SK-N-SH (cell line): ENCODE measurements at regions of chr20 and their contacts with region 1.

Region 1: DNA sequence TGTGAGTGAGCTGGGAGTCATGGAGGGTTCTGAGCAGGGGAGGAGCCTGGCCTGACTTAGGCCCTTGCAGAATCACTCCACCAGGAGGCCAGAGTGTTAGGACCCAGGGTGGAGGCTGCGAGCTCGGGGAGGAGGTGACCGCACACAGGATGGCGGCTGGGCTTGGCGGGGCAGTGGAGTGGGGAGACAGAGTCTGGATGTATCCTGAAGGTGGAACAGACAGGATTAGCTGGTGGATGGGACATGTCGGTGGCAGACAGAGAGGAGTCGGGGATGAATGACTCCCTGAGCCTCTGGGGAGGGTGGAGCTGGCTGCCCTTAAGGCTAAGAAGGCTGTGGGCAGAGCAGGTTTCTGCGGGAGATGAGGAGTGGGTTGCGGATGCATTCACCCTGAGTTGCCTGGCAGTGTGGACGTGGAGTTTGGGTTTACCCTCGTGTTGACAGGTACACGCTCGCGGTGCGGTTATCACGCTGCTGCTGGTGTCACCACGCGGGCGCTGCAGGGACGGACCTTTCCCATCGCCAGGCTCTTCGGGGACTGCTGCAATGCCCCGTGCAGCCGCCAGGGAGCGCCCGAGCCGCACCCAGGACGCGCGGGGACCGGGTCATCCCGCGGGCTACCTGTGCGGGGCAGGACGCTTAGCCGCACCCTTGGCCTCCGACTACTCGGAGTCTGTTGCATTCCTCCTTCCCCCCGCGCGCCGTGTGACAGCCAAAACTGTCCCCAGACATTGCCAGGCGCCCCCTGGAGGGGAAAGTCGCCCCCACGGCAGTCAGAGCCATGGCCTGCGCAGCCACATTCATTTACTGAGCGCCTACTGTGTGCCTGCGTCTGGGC is 43.0 kb upstream of the PTGIS start:
- DNase-seq: peak; percentile 91
- H3K4me3 ChIP-seq: peak overlapping the region; percentile 19 to 61; a peak in 3 of 4 replicates
- H3K27ac ChIP-seq: no peak overlapping the region
- H3K4me1 ChIP-seq: peaks cover 0 to 11% of the 10 kb centered on the region in 2 experiments; a peak in 1 of 4 replicates
- H3K27me3 ChIP-seq: 0 out of 2 replicates have a peak, but pooled peaks cover 5% of the 10 kb centered on the region
- CTCF ChIP-seq: peak; percentile 92
- EP300 ChIP-seq: no peak
- RAD21 ChIP-seq: peak; percentile 93

Region 2: GRCh38 chr20:49338061-49338460 is 272.9 kb before region 1 on chr20:
- CTCF ChIA-PET with region 1: interaction called, 62 read pairs
- POLR2A ChIA-PET with region 1: no interaction called
- DNase-seq: no peak
- H3K4me3 ChIP-seq: no peak overlapping the region
- H3K27ac ChIP-seq: no peak overlapping the region
- H3K4me1 ChIP-seq: peaks cover 0 to 2% of the 10 kb centered on the region in 2 experiments; a peak in 1 of 4 replicates
- H3K27me3 ChIP-seq: no peaks in the 10 kb centered on the region
- CTCF ChIP-seq: no peak
- EP300 ChIP-seq: no peak
- RAD21 ChIP-seq: no peak

Region 3: GRCh38 chr20:49446808-49447207 is 164.1 kb before region 1 on chr20:
- CTCF ChIA-PET with region 1: no interaction called
- POLR2A ChIA-PET with region 1: no interaction called
- DNase-seq: no peak
- H3K4me3 ChIP-seq: no peak overlapping the region
- H3K27ac ChIP-seq: no peak overlapping the region
- H3K4me1 ChIP-seq: peaks cover 0 to 37% of the 10 kb centered on the region in 2 experiments; a peak in 2 of 4 replicates
- H3K27me3 ChIP-seq: no peaks in the 10 kb centered on the region
- CTCF ChIP-seq: no peak
- EP300 ChIP-seq: no peak
- RAD21 ChIP-seq: no peak

Region 4: DNA sequence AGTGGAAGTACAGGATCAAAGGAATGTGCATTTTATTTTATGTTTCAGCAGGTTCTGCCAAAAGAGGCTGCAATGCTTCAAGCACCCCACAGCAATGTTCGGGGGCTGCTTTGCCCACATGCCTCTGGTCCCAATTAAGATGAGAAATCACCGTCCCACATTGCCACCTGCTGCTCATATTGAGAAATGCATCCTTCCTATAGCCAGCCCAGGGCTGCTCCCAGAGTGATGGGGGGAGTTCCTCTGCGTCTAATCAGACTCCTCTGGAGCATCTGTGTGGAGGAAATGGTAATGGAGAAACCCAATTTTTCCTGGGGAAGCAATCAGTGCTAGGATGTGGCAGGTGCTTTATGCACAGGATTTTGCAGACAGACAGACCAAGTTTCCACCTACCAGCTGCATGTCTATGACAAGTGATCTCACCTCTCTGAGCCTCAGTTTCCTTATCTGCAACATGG is 76.6 kb before region 1 on chr20:
- CTCF ChIA-PET with region 1: interaction called, 556 read pairs
- POLR2A ChIA-PET with region 1: no interaction called
- DNase-seq: peak; percentile 79
- H3K4me3 ChIP-seq: no peak overlapping the region
- H3K27ac ChIP-seq: no peak overlapping the region
- H3K4me1 ChIP-seq: peaks cover 0 to 5% of the 10 kb centered on the region in 2 experiments; a peak in 1 of 4 replicates
- H3K27me3 ChIP-seq: no peaks in the 10 kb centered on the region
- CTCF ChIP-seq: peak; percentile 80
- EP300 ChIP-seq: no peak; a peak in 1 of 4 replicates
- RAD21 ChIP-seq: peak; percentile 85

Region 5: DNA sequence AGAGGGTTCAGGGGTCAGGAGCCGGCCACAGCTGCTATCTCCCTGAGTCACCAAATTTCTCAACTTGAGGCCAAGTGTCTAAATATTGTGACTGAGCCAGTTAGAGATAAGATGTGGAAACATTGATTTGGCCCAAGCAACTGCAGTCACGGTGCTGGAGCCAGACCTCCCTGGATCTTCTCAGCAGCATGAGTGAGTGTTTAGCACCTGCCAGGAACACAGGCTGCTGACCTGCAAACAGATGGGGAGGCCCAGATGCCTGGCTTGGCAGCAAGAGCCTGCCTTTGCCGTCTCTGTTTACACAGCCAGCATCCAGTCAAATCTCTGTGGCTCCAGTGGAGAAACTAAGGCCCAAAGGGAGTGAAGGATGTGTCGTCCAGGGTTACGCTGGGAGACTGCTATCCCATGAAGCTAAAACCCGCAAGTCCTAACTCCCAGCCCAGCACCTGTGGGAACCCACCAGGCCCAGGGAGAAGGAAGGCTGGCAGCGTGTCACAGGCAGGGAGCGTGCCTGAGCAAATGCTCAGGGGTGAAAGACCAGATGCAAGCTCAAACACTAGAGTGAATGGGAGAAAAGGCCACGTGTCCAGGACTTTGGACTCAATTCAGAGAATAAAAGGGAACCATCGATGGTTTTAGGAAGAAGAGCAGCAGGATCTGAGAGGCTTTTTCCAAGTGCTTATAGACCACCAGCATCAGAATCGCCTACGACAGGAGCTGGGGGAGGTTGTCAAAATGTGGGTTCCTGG is 27.1 kb before region 1 on chr20:
- CTCF ChIA-PET with region 1: interaction called, 33 read pairs
- POLR2A ChIA-PET with region 1: no interaction called
- DNase-seq: no peak
- H3K4me3 ChIP-seq: no peak overlapping the region
- H3K27ac ChIP-seq: no peak overlapping the region; a peak in 1 of 4 replicates
- H3K4me1 ChIP-seq: peaks cover 0 to 10% of the 10 kb centered on the region in 2 experiments; a peak in 2 of 4 replicates
- H3K27me3 ChIP-seq: no peaks in the 10 kb centered on the region
- CTCF ChIP-seq: no peak
- EP300 ChIP-seq: no peak
- RAD21 ChIP-seq: no peak

Region 6: DNA sequence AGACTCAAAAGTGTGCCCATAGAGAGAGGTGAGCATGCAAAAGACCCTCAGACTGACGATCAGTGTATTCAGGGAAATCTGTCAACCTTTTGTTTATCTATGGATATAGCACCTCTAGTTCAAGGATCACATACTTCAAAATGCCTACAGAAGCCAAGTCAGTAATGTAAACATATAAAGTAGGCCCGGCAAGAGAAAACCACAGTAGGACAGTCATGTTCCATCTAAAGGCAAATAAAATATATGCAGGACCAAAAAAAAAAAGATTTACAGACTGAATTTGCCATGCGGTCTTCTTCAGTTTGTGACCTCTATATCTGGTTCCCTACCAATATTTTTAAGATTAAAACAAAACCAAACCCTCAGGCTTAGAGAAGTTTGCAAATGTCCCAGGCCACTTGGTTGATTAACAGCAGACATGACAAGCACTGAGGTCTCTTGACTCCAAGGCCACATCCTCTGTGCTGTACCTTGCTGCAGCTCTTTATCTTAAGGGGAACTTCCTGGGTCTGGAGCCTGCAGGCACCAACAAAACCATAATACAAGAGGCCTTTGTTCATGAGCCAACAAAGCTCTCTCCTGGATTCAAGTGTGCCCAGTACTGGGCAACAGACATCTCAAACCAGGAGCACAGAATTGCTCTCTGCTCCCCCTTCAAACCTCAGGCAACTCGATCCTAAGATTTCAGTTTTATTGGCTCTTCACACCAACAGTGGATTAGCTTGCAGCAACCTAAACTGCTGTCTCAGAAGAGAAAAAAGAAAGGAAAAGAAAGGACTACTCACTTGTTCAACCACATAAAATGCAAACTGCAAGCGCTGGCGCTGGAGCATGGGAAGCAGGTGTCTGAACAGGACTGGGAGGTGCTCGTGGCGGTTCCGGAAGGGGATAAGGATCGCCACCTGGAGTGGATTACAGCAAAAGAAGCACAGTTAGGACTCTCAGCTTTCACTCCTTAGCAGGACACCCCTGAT is 31.1 kb after region 1 on chr20:
- CTCF ChIA-PET with region 1: interaction called, 18 read pairs
- POLR2A ChIA-PET with region 1: no interaction called
- DNase-seq: no peak
- H3K4me3 ChIP-seq: no peak overlapping the region
- H3K27ac ChIP-seq: no peak overlapping the region
- H3K4me1 ChIP-seq: peaks cover 0 to 9% of the 10 kb centered on the region in 2 experiments; a peak in 2 of 4 replicates
- H3K27me3 ChIP-seq: no peaks in the 10 kb centered on the region
- CTCF ChIP-seq: no peak
- EP300 ChIP-seq: no peak
- RAD21 ChIP-seq: no peak

Region 7: DNA sequence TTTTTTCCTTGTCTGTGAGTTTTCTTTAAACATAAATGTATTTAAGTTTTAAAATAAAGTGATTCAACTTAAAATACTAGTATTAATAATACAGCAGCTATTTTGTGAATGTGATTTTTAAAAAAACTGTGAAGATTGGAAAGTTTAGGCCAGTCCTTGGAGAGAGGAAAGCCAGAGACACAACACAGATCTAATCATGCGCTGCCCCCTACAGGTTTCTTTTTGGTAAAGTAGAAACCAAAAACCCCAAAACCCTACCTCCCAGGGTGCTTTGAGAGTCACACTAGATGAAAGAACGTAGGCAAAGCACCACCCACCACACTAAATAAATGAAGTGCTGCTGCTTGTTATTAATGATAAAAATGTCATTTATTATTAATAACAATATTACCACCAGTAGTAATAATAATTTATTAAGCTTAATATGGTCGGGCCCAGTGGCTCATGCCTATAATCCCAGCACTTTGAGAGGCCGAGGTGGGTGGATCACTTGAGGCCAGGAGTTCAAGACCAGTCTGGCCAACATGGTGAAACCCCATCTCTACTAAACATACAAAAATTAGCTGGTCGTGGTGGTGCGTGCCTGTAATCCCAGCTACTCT is 235.4 kb after region 1 on chr20:
- CTCF ChIA-PET with region 1: interaction called, 249 read pairs
- POLR2A ChIA-PET with region 1: interaction called, 6 read pairs
- DNase-seq: peak; percentile 65
- H3K4me3 ChIP-seq: no peak overlapping the region
- H3K27ac ChIP-seq: no peak overlapping the region
- H3K4me1 ChIP-seq: peaks cover 0 to 11% of the 10 kb centered on the region in 2 experiments; a peak in 2 of 4 replicates
- H3K27me3 ChIP-seq: no peaks in the 10 kb centered on the region
- CTCF ChIP-seq: peak; percentile 75
- EP300 ChIP-seq: no peak
- RAD21 ChIP-seq: peak; percentile 88

Region 8: DNA sequence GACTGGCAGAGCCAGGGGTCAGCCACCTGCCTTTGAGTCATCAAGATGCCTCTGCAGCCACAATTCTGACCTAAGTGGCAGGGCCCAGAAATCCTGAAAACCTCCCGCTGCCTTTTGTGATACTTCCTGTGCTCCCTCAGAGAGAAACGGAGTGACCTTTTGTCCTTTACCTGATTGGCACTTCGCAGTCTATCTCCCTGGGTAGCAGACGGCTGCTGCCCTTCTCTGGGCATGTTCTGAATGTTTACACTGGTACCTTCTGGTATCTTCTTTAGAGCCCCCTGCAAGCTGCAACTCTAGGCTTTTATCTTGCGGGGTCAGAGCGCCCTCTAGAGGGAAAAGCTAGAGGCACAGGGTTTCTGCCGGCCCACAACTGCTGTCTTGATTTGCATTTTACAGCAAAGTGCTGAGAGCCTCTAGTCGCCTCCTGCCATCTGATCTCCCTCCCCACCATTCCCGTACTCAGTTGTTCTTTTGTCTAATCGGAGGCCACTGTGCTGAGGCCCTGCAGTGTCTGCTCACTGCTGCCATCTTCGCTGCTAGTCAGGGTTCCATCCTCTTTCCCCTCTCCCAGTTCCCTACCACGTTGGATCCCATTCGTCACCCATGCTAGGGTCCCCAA is 277.5 kb after region 1 on chr20:
- CTCF ChIA-PET with region 1: interaction called, 131 read pairs
- POLR2A ChIA-PET with region 1: no interaction called
- DNase-seq: peak; percentile 85
- H3K4me3 ChIP-seq: peak overlapping the region in 1 of 2 experiments; percentile 55; a peak in 1 of 4 replicates
- H3K27ac ChIP-seq: no peak overlapping the region; a peak in 1 of 4 replicates
- H3K4me1 ChIP-seq: peaks cover 0 to 8% of the 10 kb centered on the region in 2 experiments; a peak in 1 of 4 replicates
- H3K27me3 ChIP-seq: no peaks in the 10 kb centered on the region
- CTCF ChIP-seq: peak; percentile 95
- EP300 ChIP-seq: peak in 1 of 2 experiments; percentile 37; a peak in 1 of 4 replicates
- RAD21 ChIP-seq: peak; percentile 87